ENCODE measurements at regions of chr12 and their contacts with region 1.

Region 1: DNA sequence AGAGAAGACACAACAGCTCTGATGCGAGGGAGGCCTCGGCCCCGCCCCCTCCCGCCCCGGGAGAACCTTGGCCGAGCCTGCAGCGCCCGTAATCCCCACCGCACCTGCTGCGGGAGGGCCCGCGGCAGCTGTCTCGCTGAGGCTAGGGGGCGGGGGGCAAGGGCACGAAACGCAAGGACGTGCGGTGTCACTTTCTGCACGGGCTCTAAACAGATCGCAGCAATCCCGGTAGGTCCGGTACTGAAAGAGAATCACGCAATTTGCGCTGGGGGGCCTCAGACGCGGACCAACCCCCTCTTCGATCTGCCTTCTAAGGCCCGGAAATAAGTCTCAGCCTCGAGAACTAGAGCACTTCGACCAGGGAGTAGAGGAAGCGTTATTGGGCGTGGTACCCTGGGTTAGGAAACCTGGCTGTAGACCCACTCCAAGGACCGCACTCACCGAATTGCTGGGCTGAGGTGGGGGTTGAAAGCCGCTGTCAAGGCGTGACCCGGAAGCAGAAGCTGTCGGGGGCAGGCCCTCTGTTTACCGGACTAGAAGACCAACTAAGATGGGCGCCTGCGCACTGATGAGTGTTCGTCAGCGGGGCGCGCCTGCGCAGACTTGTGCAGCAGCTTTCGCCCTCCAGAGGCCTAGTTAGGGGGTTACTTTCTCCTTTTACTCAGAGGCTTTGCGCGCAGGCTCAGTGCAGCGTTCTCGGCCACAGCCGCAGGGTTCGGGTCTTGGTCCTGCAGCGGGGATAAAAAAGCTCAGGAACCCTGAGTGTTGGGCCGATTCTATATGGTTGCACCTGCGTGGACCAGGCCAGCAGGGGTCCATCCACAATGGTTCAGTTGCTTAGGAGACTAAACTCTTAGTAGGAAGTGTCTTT is at the start of gene ASB8:
- DNase-seq: peak; percentile 97 to 99 (median 98)
- ATAC-seq: peak; percentile 98
- H3K4me3 ChIP-seq: peak within 1 kb of the TSS; percentile 78 to 97
- H3K27ac ChIP-seq: peak within 1 kb of the TSS; percentile 83 to 89
- H3K4me1 ChIP-seq: peaks cover 0 to 18% of the 10 kb centered on the region in 2 donors
- H3K27me3 ChIP-seq: no peaks in the 10 kb centered on the region
- CTCF ChIP-seq: peak; percentile 26 to 53
- polyA plus RNA-seq, gene ASB8: 34.6 to 44.5 (median 38.8) TPM

Region 2: GRCh38 chr12:48001505-48002413 is 155.5 kb before region 1 on chr12:
- intact Hi-C with region 1: no loop called
- DNase-seq: peak in 3 of 4 donors; percentile 53 to 83 (median 57)
- ATAC-seq: peak; percentile 89
- H3K4me3 ChIP-seq: peak overlapping the region; percentile 27
- H3K27ac ChIP-seq: no peak overlapping the region
- H3K4me1 ChIP-seq: peaks cover 26 to 45% of the 10 kb centered on the region in 2 donors
- H3K27me3 ChIP-seq: peaks cover 68 to 100% of the 10 kb centered on the region in 2 donors
- CTCF ChIP-seq: no peak

Region 3: DNA sequence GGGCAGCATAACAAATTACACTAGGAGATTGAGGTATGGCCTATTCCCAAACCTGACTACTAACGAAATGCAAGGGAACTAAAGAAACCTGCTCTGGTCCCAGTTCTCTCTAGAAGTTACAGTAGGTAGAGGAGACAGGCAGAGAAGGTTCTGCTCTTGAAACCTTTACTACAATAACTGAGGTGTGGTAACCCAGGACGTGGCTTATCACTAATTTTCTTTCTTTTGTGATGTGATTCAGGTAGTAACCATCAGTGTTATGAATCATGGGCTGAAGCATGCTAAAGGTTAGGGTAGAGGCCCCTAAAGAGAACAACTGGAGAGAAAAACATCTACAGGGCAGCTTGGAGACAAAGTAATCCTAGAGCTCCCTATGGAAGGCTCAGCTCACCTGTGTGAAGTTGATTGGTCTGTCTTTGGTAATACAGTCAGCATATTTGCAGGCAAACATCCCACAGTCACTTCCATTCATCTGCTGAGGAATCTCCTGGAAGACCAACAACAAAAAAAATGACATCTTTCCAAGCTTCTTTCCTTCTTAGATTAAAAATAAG is 111.2 kb before region 1 on chr12:
- intact Hi-C with region 1: no loop called
- DNase-seq: no peak
- ATAC-seq: no peak
- H3K4me3 ChIP-seq: no peak overlapping the region
- H3K27ac ChIP-seq: no peak overlapping the region
- H3K4me1 ChIP-seq: no peaks in the 10 kb centered on the region
- H3K27me3 ChIP-seq: no peaks in the 10 kb centered on the region
- CTCF ChIP-seq: no peak

Region 4: GRCh38 chr12:48105862-48106680 is 51.2 kb before region 1 on chr12 and contains the start of gene SENP1:
- intact Hi-C with region 1: loop called in 1 of 2 experiments (anchors 5 kb)
- DNase-seq: peak; percentile 88 to 95 (median 90)
- ATAC-seq: peak; percentile 91
- H3K4me3 ChIP-seq: peak within 1 kb of the TSS; percentile 85 to 88
- H3K27ac ChIP-seq: peak within 1 kb of the TSS; percentile 96 to 97
- H3K4me1 ChIP-seq: peaks cover 17 to 37% of the 10 kb centered on the region in 2 donors
- H3K27me3 ChIP-seq: no peaks in the 10 kb centered on the region
- CTCF ChIP-seq: no peak
- polyA plus RNA-seq, gene SENP1: 23.2 to 28.0 (median 25.5) TPM

Region 5: GRCh38 chr12:48125985-48126384 is 31.3 kb before region 1 on chr12:
- intact Hi-C with region 1: loop called in 1 of 2 experiments (anchors 2 kb)
- DNase-seq: no peak
- ATAC-seq: no peak
- H3K4me3 ChIP-seq: no peak overlapping the region
- H3K27ac ChIP-seq: no peak overlapping the region
- H3K4me1 ChIP-seq: no peaks in the 10 kb centered on the region
- H3K27me3 ChIP-seq: no peaks in the 10 kb centered on the region
- CTCF ChIP-seq: no peak

Region 6: DNA sequence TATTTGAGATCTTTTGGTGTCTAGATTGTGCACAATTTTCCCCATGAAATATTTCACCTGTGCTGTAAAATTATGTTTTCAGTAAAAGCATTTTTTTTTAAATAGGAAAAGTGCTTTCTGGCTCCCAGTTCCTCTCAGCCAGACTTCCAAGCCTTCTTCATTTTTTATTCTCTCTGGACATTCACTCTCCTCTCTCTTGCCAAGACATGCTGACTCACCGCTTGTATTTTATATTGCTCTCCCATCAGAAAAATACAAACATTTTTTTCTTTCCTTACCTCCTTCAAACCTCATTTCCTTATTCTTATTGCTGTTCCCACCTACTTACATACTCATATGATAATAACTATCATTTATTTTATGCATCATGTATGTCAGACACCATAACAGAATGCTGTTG is 231.2 kb after region 1 on chr12:
- intact Hi-C with region 1: no loop called
- DNase-seq: no peak
- ATAC-seq: peak; percentile 59
- H3K4me3 ChIP-seq: no peak overlapping the region
- H3K27ac ChIP-seq: no peak overlapping the region
- H3K4me1 ChIP-seq: no peaks in the 10 kb centered on the region
- H3K27me3 ChIP-seq: no peaks in the 10 kb centered on the region
- CTCF ChIP-seq: no peak

Measured in left lung (tissue), 14 donors.